Breast epithelium (tissue), 4 donors: ENCODE measurements at regions of chr5 and their contacts with region 1.

Region 1: DNA sequence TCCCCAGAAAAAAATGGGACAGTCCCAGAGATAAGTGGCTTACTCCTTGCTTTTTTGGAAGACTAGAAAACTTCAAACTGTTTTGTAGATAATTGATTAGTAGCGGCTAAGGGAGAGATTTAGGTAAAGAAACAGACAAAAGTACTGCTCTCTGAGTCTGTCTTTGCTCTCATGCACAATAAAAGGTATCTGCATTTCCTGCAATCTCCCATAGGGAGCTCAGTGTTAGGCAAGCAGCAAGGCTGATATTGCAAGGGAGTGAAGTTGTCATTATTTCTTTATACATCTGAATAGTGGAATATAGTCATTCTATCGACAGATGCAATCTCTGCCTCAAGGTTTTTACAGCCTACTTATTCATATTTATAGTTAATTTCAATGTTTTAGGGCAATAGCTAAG is 54.9 kb upstream of the CAMK4 start:
- DNase-seq: no peak
- H3K4me3 ChIP-seq: no peak overlapping the region
- H3K27ac ChIP-seq: no peak overlapping the region
- H3K4me1 ChIP-seq: no peaks in the 10 kb centered on the region
- H3K27me3 ChIP-seq: no peaks in the 10 kb centered on the region
- CTCF ChIP-seq: no peak
- POLR2A ChIP-seq: no peak

Region 2: DNA sequence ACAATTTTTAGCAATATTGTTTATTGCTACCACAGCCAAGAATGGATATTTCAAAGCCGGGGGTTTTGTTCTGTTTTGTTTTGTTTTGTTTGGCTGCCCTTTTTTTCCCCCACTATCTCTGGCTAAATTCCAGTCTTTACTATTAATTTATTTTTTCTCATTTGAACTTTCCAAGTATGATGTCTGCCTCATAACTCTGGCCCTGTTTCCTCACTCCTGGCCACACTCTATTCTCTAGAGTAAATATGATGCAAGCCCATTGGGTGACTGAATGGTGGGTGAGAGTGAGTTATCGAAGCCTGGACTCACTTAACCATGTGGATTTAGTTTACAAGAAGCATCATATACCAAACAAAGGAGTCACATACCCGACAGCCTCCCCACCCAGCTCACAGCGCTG is 35.2 kb before region 1 on chr5:
- intact Hi-C with region 1: no loop called
- DNase-seq: no peak
- H3K4me3 ChIP-seq: no peak overlapping the region
- H3K27ac ChIP-seq: peak overlapping the region in 1 of 2 donors; percentile 71
- H3K4me1 ChIP-seq: no peaks in the 10 kb centered on the region
- H3K27me3 ChIP-seq: no peaks in the 10 kb centered on the region
- CTCF ChIP-seq: no peak
- POLR2A ChIP-seq: no peak

Region 3: GRCh38 chr5:112196584-112196983 is 1027.3 kb after region 1 on chr5:
- intact Hi-C with region 1: loop called (anchors 5 kb)
- DNase-seq: no peak
- H3K4me3 ChIP-seq: no peak overlapping the region
- H3K27ac ChIP-seq: no peak overlapping the region
- H3K4me1 ChIP-seq: no peaks in the 10 kb centered on the region
- H3K27me3 ChIP-seq: no peaks in the 10 kb centered on the region
- CTCF ChIP-seq: no peak
- POLR2A ChIP-seq: no peak